ENCODE measurements at regions of chr10 and their contacts with region 1.

Region 1: GRCh38 chr10:72331601-72332422 is 22.9 kb downstream of the DNAJB12 start:
- DNase-seq: peak; percentile 78 to 99 (median 92)

Region 2: DNA sequence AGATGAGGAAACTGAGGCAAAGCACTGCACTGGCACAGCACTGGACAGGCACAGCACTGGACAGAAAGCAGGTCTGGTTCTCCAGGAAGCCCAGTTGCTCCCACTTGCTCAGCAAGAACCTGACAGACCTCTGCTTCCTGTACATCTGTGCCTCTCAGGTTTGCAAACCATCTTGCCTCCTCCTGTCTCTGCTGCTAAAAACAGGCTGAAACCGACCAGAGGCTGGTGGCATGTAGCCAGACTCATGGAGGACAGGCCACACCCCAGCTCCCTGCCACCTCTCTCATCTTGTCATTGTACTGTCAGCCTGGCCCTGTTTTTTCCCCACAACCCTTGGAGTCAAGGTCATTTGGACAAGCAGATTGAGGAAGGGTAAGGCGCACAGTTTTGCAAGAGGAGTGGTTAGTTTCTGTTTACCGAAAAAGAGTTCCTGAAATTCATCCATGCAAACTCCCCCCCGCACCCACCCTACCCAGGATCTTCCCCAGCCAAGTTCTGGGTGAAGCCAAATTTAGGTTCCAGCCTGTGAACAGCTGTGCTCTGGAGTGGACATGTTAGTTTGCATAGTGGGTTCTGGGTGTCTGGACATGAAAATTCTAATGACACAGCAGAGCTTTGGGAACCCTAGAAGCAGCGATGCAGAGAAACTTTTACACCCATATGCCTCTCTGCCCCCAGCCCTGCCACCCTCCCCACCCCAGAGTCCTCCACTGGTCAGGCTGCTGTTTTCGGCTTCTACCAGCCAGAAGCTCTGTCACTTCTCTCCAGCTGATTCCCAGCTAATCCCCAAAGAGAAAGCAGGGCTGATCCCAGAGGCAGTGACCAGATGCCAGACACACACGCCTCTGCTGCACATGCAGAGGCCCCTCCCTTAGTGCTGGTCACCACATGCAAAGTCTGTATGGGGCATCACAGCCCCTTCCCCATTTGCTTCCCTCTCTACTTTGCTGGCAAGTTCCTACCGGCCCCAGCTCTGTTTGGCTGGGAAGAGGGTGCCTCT is 603.8 kb before region 1 on chr10:
- intact Hi-C with region 1: no loop called
- DNase-seq: no peak

Region 3: GRCh38 chr10:71963756-71964668 is 367.8 kb before region 1 on chr10 and contains the start of gene CHST3:
- intact Hi-C with region 1: loop called (anchors 10 kb)
- DNase-seq: peak; percentile 42 to 94 (median 68)

Region 4: GRCh38 chr10:72048450-72049124 is 283.2 kb before region 1 on chr10:
- intact Hi-C with region 1: loop called (anchors 5 kb)
- DNase-seq: peak; percentile 86 to 100 (median 96)

Region 5: DNA sequence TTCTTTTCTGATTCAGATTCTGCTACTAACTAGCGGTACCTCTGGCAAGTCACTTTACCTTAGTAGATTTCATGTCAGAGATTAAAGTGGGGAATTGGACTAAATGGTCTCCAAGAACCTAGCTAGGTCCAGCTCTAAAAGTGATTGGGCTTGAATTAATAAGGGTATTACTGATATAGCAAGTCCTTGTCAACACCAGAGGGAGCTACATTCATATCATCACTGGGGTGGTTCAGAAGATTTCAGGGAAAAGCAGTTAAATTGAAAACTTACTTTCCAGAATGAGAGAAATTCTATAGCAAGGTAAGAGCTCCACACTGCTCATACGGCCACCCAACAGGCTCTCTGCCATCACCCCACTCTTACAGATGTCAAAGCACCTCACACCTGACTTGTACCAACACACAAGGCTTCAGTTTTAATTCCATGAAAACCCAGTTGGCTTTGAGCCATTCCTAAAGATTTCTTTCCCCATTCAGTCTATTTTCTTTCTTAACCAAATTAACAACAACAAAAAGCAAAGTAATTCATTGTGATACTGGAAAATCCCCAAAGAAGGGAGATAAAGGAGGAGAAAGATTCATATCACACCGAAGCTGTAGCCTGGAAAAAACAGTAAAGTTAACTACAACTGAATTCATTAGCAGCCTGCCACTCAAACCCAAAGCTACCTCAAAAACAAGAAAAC is 205.5 kb before region 1 on chr10:
- intact Hi-C with region 1: loop called (anchors 5 kb)
- DNase-seq: no peak

Region 6: DNA sequence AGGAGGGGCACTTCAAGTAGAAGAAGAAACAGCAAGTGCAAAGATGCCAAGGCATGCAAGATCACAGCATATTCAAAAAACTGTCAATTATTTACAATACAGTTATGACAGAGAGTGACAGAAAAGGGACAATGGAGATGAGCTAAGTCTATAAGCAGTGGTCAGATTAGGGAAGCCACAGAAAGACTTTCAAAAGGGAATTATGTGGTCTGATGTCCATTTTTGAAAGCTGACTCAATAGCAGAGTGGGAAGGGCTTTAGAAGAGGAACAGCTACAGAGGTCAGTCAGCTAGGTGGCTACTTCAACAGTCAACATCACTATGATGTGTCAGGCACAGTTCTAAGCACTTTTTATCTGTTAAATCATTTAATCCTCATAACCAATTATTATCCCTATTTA is 198.3 kb before region 1 on chr10:
- intact Hi-C with region 1: loop called (anchors 5 kb)
- DNase-seq: no peak

Region 7: GRCh38 chr10:72254813-72255568 is 76.8 kb before region 1 on chr10:
- intact Hi-C with region 1: loop called (anchors 5 kb)
- DNase-seq: peak; percentile 87 to 99 (median 93)

Region 8: GRCh38 chr10:72414642-72415041 is 82.8 kb after region 1 on chr10:
- intact Hi-C with region 1: no loop called
- DNase-seq: no peak